HEK293 (cell line): ENCODE measurements at regions of chr1 and their contacts with region 1.

Region 1: GRCh38 chr1:227318003-227318852 is at the start of gene CDC42BPA:
- H3K4me3 ChIP-seq: peak within 1 kb of the TSS; percentile 65
- H3K27ac ChIP-seq: peak within 1 kb of the TSS; percentile 98
- H3K4me1 ChIP-seq: no peaks in the 10 kb centered on the region
- CTCF ChIP-seq: no peak

Region 2: GRCh38 chr1:227357171-227357880 is 39.1 kb after region 1 on chr1:
- CTCF ChIA-PET with region 1: interaction called, 4 read pairs
- POLR2A ChIA-PET with region 1: interaction called, 10 read pairs
- H3K4me3 ChIP-seq: no peak overlapping the region
- H3K27ac ChIP-seq: no peak overlapping the region
- H3K4me1 ChIP-seq: peaks cover 15% of the 10 kb centered on the region
- CTCF ChIP-seq: no peak